ENCODE measurements at regions of chr5 and their contacts with region 1.

Region 1: GRCh38 chr5:170267431-170268152 is 30.0 kb downstream of the LCP2 start:
- DNase-seq: peak; percentile 84
- H3K4me3 Mint-ChIP-seq: peak overlapping the region; percentile 52
- H3K27ac Mint-ChIP-seq: peak overlapping the region; percentile 90
- H3K4me1 Mint-ChIP-seq: peaks cover 91% of the 10 kb centered on the region
- H3K27me3 Mint-ChIP-seq: no peaks in the 10 kb centered on the region

Region 2: GRCh38 chr5:170247363-170247762 is 20.2 kb before region 1 on chr5:
- CTCF ChIA-PET with region 1: interaction called, 8 read pairs
- POLR2A ChIA-PET with region 1: interaction called, 10 read pairs
- DNase-seq: no peak
- H3K4me3 Mint-ChIP-seq: no peak overlapping the region
- H3K27ac Mint-ChIP-seq: no peak overlapping the region
- H3K4me1 Mint-ChIP-seq: peaks cover 23% of the 10 kb centered on the region
- H3K27me3 Mint-ChIP-seq: no peaks in the 10 kb centered on the region

Region 3: GRCh38 chr5:170287532-170287931 is 19.9 kb after region 1 on chr5:
- CTCF ChIA-PET with region 1: interaction called, 371 read pairs
- POLR2A ChIA-PET with region 1: interaction called, 1,149 read pairs
- DNase-seq: no peak
- H3K4me3 Mint-ChIP-seq: peak overlapping the region; percentile 0
- H3K27ac Mint-ChIP-seq: peak overlapping the region; percentile 74
- H3K4me1 Mint-ChIP-seq: peaks cover 99% of the 10 kb centered on the region
- H3K27me3 Mint-ChIP-seq: no peaks in the 10 kb centered on the region

Region 4: DNA sequence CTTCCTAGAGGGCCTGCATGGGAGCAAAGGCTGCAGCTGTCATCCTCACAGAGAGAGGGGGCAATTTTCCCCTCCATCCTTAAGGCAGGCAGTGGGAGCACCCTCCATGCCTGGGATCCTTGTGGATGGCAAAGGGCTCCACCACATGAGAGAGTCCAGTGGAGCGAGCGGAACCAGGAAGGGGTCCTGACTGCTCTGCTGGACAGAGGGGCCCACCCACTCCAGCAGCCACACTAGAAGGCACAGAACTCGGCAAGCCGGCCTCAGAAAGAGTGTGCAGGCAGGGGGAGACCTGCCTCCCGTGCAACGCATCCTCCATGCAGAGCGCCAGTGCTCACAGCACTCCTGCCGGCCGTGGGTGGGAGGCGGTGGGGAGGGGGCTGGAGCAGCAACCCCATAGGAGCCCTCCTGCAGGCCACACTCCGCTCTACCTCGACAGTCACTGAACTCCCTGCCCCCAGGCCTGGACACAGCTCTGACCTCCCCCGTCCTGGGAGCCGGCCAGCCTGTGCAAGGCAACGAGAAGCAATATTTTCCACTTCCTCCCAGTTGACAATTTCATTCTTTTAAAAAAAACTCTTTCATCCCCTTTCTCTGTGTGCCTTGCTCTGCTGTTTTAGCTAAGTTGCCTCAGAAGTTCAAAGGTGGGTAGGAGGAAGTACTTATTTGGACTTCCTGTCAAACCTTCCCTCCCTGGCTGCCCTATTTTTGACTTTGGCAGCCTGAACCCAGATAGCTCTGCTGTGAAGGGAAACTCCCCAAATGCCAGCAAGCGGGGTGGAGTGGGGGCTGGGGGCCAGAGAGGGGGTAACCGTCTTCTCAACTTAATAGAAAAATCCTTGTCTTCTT is 35.3 kb after region 1 on chr5:
- CTCF ChIA-PET with region 1: interaction called, 371 read pairs
- POLR2A ChIA-PET with region 1: interaction called, 1,149 read pairs
- DNase-seq: peak; percentile 72
- H3K4me3 Mint-ChIP-seq: peak overlapping the region; percentile 54
- H3K27ac Mint-ChIP-seq: peak overlapping the region; percentile 84
- H3K4me1 Mint-ChIP-seq: peaks cover 72% of the 10 kb centered on the region
- H3K27me3 Mint-ChIP-seq: no peaks in the 10 kb centered on the region

Region 5: GRCh38 chr5:170333161-170333910 is 65.7 kb after region 1 on chr5:
- CTCF ChIA-PET with region 1: interaction called, 129 read pairs
- POLR2A ChIA-PET with region 1: interaction called, 290 read pairs
- DNase-seq: peak; percentile 79
- H3K4me3 Mint-ChIP-seq: peak overlapping the region; percentile 64
- H3K27ac Mint-ChIP-seq: peak overlapping the region; percentile 72
- H3K4me1 Mint-ChIP-seq: peaks cover 26% of the 10 kb centered on the region
- H3K27me3 Mint-ChIP-seq: no peaks in the 10 kb centered on the region